Left cardiac atrium (tissue), 4 donors: ENCODE measurements at regions of chr5 and their contacts with region 1.

Region 1: GRCh38 chr5:106875591-106876297 is 795.0 kb downstream of the EFNA5 start:
- DNase-seq: no peak
- ATAC-seq: peak in 1 of 2 donors; percentile 30

Region 2: GRCh38 chr5:106277540-106278096 is 598.1 kb before region 1 on chr5:
- intact Hi-C with region 1: loop called in 1 of 2 experiments (anchors 10 kb)
- DNase-seq: no peak
- ATAC-seq: no peak

Region 3: DNA sequence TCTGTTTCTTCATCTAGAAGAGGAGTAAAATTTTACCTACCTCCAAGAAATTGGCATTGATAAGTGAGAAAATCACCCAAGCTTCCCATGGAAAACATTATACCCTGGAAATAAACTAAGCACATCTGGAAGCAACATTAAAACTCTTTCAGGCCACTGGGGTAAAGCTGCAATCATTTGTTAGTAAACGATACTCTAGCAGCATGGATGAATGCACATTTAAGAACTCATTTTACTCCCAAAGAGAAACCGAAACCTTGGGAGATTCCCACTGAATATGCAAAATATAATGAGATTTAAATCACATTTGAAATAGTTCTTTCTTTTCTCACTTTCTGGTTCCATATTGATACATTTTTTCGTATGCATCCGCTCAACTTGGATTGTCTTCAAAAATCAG is 327.5 kb after region 1 on chr5:
- intact Hi-C with region 1: no loop called
- DNase-seq: no peak
- ATAC-seq: no peak